ENCODE measurements at regions of chr11 and their contacts with region 1.

Region 1: DNA sequence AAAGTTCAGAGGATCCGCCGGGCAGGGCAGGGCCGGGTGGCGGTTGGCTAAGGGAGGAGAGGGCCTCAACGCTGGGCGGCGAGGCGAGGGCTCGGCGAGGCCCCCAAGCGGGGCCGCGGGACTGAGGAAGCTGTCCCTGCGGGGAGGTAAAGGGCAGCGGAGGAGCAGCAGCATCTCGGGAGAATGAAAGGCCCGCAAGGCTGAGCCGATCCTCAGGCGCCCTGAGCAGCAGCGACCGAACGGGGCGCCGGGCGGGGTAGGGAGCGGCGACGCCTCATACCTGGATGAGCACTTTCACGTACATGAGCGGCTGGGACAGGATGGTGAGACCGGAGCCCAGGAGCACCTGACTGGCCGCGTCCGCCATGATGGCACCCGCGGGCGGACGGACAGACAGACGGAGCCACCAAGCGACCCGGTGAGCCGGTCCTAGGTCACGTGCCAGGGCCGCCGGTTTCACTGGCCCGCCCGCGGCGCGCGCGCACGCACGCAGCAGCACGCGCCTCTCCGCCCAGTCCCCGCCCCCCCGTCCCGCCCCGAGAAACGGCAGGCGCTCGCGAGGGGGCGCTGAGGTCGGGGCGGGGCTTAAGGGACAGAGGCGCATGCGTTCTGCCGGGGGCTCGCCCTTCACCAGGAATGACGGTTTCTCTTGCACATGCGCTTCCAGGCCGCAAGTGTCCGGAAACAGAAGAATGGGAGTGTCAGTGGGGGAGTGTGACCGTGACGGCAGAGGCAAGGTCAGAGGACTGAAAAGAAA is at the start of gene MTCH2:
- DNase-seq: peak; percentile 96
- ATAC-seq: peak; percentile 97 to 99 (median 98)
- H3K4me3 ChIP-seq: peak within 1 kb of the TSS; percentile 49 to 98 (median 79)
- H3K27ac ChIP-seq: peak within 1 kb of the TSS; percentile 64 to 97 (median 90)
- H3K4me1 ChIP-seq: peaks cover 2 to 23% (median 20%) of the 10 kb centered on the region in 9 donors
- H3K27me3 ChIP-seq: no peaks in the 10 kb centered on the region
- CTCF ChIP-seq: peak; percentile 10 to 68 (median 39)
- total RNA-seq, gene MTCH2: 90.7 to 137 (median 104) TPM

Region 2: DNA sequence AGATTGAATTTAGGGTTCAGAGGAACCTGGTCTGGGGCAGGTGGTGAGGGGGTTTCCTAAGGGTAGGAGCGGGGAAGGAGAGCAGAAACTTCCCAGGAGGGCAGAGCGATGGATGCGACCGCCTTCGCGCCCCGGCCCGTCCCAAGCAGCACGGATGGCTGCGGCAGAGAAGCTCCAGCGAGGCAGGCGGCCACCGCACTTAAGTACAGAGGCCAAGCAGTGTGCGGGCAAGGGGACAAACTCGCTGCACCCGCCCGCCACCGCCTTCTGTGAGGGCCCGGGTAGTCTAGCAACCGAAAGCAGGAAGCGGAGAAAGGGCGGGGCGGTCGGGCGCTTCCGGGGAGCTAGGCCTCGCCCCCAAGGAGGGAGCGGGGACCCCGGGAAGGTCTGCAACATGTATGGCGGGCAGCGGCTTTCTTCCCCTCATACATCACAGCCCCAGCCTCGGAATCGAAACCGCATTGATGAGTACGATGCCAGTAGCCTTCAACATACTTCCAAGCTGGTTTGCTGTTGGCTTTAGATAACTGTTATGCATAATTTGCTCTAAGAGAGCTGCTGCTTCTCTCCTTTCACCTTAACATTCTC is 72.9 kb after region 1 on chr11 and contains the start of gene AGBL2:
- intact Hi-C with region 1: loop called in 5 of 10 experiments (anchors 2 to 10 kb)
- DNase-seq: peak; percentile 76 to 80
- ATAC-seq: peak; percentile 90 to 96 (median 93)
- H3K4me3 ChIP-seq: peak within 1 kb of the TSS; percentile 54 to 88 (median 78)
- H3K27ac ChIP-seq: peak within 1 kb of the TSS in 9 of 10 donors; percentile 39 to 85 (median 76)
- H3K4me1 ChIP-seq: peaks cover 0 to 14% (median 3%) of the 10 kb centered on the region in 9 donors
- H3K27me3 ChIP-seq: no peaks in the 10 kb centered on the region
- CTCF ChIP-seq: no peak
- total RNA-seq, gene AGBL2: 0.13 to 1.5 (median 0.44) TPM in 5 of 10 donors, not detected in the others

Region 3: DNA sequence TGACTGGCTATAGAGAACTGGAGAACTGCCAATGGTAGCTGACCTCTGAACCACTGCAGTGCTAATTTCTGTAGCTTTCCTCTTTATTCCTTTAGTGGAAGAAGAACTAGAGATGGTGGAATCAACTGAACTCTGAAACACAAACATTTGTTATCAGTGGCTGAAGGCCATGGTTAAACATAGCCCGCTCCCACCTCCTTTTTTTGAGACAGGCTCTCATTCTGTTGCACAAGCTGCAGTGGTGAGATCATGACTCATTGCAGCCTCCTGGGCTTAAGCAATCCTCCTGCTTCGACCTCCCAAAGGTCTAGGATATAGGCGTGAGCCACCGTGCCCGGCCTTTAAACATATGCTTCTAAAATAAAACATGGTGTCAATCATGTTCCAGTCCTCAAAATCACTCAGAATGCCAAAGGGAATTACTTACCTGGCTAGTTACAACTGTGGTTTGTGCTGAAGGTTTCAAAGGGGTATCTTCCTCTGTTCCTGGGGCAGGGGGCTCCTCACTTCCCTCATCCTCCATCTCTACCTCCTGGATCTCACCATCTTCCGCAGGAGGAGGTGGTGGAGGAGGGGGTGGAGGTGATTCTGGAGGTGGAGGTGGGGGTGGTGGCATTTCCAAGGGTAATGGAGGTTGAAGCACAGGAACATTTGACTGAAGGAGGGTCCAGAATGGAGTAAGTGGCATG is 81.9 kb after region 1 on chr11:
- intact Hi-C with region 1: loop called in 4 of 10 experiments (anchors 5 to 10 kb)
- DNase-seq: no peak
- ATAC-seq: peak in 7 of 8 donors; percentile 29 to 85 (median 48)
- H3K4me3 ChIP-seq: no peak overlapping the region
- H3K27ac ChIP-seq: peak overlapping the region in 6 of 10 donors; percentile 4 to 57 (median 38)
- H3K4me1 ChIP-seq: peaks cover 0 to 16% (median 10%) of the 10 kb centered on the region in 9 donors
- H3K27me3 ChIP-seq: no peaks in the 10 kb centered on the region
- CTCF ChIP-seq: no peak

Region 4: GRCh38 chr11:47766305-47767227 is 124.3 kb after region 1 on chr11:
- intact Hi-C with region 1: loop called in 1 of 10 experiments (anchors 5 kb)
- DNase-seq: peak; percentile 66 to 69
- ATAC-seq: peak in 7 of 8 donors; percentile 8 to 51 (median 43)
- H3K4me3 ChIP-seq: peak overlapping the region; percentile 78 to 100 (median 91)
- H3K27ac ChIP-seq: peak overlapping the region; percentile 93 to 100 (median 98)
- H3K4me1 ChIP-seq: peaks cover 4 to 40% (median 33%) of the 10 kb centered on the region in 9 donors
- H3K27me3 ChIP-seq: no peaks in the 10 kb centered on the region
- CTCF ChIP-seq: no peak

Region 5: DNA sequence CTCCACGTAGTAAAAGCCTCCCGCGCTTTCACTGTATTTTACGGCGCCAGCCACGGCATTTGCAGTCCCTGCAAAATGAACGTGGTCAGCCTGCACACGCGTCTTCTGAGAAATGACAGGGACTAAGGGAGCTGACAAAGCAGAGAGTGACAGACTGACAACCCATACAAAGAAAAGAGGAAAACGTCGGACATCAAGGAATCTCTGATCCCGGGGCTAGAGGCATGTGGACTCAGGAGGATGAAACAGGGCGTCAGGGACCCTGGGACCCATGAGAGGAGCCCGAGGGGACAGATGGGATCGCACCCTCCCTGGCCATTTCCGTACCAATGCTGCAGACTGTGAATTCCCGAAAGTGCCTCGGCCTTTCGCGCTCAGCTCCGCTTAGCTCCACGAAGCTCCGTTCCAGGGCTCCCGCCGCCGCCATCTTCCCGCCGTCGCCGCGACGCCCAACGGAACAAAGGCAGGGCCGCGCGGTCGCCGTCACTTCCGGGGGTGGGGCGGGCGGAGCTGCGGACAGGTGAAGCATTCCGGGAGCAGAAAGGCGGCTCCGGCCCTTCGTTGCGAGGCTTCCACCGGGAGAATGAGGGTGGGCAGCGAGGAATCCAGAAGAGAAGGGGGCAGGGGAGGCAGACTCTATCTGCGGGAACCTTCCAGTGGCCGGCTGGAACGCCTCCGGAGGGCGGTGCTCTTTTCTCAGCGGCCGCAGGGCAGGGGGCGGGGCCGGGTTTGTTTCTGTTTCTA is 205.8 kb after region 1 on chr11 and contains the start of gene NUP160:
- intact Hi-C with region 1: loop called in 5 of 10 experiments (anchors 1 to 10 kb)
- DNase-seq: peak; percentile 86 to 87
- ATAC-seq: peak; percentile 91 to 97 (median 95)
- H3K4me3 ChIP-seq: peak within 1 kb of the TSS; percentile 53 to 99 (median 86)
- H3K27ac ChIP-seq: peak within 1 kb of the TSS; percentile 69 to 95 (median 92)
- H3K4me1 ChIP-seq: peaks cover 3 to 50% (median 30%) of the 10 kb centered on the region in 9 donors
- H3K27me3 ChIP-seq: no peaks in the 10 kb centered on the region
- CTCF ChIP-seq: peak in 2 of 9 donors; percentile 29 to 35
- total RNA-seq, gene NUP160: 13.4 to 17.7 (median 14.7) TPM

Region 6: GRCh38 chr11:47858169-47858543 is 215.9 kb after region 1 on chr11:
- intact Hi-C with region 1: loop called in 1 of 10 experiments (anchors 10 kb)
- DNase-seq: no peak
- ATAC-seq: peak in 7 of 8 donors; percentile 36 to 76 (median 50)
- H3K4me3 ChIP-seq: no peak overlapping the region
- H3K27ac ChIP-seq: peak overlapping the region in 1 of 10 donors; percentile 9
- H3K4me1 ChIP-seq: peaks cover 0 to 30% (median 2%) of the 10 kb centered on the region in 9 donors
- H3K27me3 ChIP-seq: no peaks in the 10 kb centered on the region
- CTCF ChIP-seq: no peak

Measured in heart right ventricle (tissue), 16 donors.